ENCODE measurements at regions of chr20 and their contacts with region 1.

Region 1: GRCh38 chr20:7790189-7790588 is 150.1 kb downstream of the HAO1 start:
- DNase-seq: peak; percentile 53

Region 2: GRCh38 chr20:7841971-7842310 is 51.8 kb after region 1 on chr20:
- in situ Hi-C with region 1: loop called (anchors 5 kb)
- DNase-seq: peak; percentile 8

Measured in G401 (cell line).